ENCODE measurements at regions of chr3 and their contacts with region 1.

Region 1: GRCh38 chr3:143329567-143330211 is 210.1 kb downstream of the CHST2 start:
- ATAC-seq: peak; percentile 5 to 88 (median 66)
- H3K4me3 ChIP-seq: no peak overlapping the region
- H3K27ac ChIP-seq: peak overlapping the region in 1 of 2 donors; percentile 24
- H3K4me1 ChIP-seq: peaks cover 9 to 28% of the 10 kb centered on the region in 2 donors

Region 2: GRCh38 chr3:143124601-143125520 is 204.8 kb before region 1 on chr3:
- in situ Hi-C with region 1: loop called in 3 of 9 experiments (anchors 5 to 25 kb)
- ATAC-seq: peak in 1 of 8 experiments; percentile 48
- H3K4me3 ChIP-seq: peak overlapping the region in 2 of 5 donors; percentile 5
- H3K27ac ChIP-seq: no peak overlapping the region
- H3K4me1 ChIP-seq: peaks cover 7 to 22% of the 10 kb centered on the region in 2 donors

Region 3: GRCh38 chr3:143644370-143645089 is 314.8 kb after region 1 on chr3:
- in situ Hi-C with region 1: loop called in 1 of 9 experiments (anchors 25 kb)
- ATAC-seq: peak; percentile 62 to 99 (median 88)
- H3K4me3 ChIP-seq: no peak overlapping the region
- H3K27ac ChIP-seq: no peak overlapping the region
- H3K4me1 ChIP-seq: peaks cover 6 to 7% of the 10 kb centered on the region in 2 donors

Region 4: DNA sequence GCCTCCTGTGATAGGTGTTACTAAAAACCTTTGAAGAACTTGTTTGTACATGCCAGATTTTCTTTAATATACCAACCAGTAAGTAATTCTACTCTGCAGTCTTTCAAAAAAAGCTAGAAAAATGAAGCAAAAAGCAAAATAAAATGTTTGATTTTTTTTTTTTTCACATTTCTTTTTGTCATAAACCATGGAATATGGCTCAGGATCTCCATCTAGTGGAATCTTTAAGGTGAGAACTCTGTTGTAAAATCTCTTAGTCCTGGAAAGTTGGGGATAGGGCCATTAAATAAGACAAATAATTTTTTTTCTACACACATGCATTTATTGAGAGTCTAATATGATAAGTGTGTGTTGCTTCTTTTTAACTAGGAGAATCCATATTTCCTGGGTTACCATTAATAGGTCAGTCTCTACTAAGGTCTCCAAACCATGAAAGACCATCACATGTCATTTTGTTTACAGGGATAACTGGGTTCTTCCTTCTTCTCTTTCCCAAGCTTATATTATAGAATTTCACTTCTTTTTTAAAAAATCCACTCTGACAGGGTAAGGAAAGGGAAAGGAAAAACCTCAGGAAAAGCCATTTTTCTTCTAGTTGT is 434.0 kb after region 1 on chr3:
- in situ Hi-C with region 1: loop called in 1 of 9 experiments (anchors 25 kb)
- ATAC-seq: peak in 3 of 8 experiments; percentile 30 to 39 (median 31)
- H3K4me3 ChIP-seq: no peak overlapping the region
- H3K27ac ChIP-seq: no peak overlapping the region
- H3K4me1 ChIP-seq: no peaks in the 10 kb centered on the region

Measured in motor neuron (in vitro differentiated cells).